ENCODE measurements at regions of chrX and their contacts with region 1.

Region 1: GRCh38 chrX:68945603-68946228 is 116.9 kb downstream of the EFNB1 start:
- DNase-seq: peak in 1 of 42 donors; percentile 32

Region 2: DNA sequence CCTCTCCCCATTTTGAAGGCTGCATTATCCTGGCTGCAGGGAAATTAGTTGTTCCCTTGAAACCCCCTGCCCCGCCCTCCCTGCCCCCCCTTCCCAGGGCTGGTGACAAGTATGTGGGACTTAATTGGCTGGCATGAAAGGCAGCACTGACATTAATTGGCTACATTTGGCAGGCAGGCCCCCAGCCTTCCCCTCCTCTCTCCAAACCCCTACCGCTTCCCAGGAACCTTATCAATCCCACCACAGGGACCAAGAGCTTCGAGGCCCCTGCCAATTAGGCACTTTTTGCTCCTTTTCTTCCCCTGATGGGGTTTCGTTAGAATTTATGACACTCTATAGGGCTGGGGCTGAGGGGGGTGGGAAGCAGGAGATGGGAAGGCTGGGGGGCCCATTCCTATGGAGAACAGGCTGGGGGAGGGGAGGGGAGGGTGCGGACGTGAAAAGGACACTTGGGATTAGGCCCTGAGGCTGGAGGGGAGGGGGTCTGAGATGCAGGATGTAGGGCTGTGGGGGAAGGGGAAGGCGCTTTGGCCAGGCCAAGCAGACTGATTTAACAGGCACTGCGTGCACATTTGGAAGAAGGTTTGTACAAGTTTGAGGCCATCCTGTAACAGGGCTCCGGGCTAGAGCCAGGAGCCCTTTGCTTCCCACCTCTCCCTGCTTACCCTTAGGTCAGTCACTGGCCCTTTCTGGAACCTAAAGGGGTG is 64.7 kb before region 1 on chrX:
- intact Hi-C with region 1: loop called (anchors 10 kb)
- DNase-seq: no peak

Measured in head of caudate nucleus (tissue), 42 donors.